Heart left ventricle (tissue), 16 donors: ENCODE measurements at regions of chr7 and their contacts with region 1.

Region 1: GRCh38 chr7:22559829-22560489 is 60.0 kb upstream of the STEAP1B start:
- DNase-seq: peak in 4 of 5 donors; percentile 70 to 80 (median 73)
- ATAC-seq: peak; percentile 65 to 78 (median 72)
- H3K4me3 ChIP-seq: no peak overlapping the region
- H3K27ac ChIP-seq: peak overlapping the region in 6 of 12 donors; percentile 70 to 85 (median 82)
- H3K4me1 ChIP-seq: peaks cover 7 to 49% (median 37%) of the 10 kb centered on the region in 12 donors
- H3K27me3 ChIP-seq: no peaks in the 10 kb centered on the region
- CTCF ChIP-seq: peak; percentile 75 to 96 (median 90)
- POLR2A ChIP-seq: no peak

Region 2: GRCh38 chr7:22617166-22617565 is 57.2 kb after region 1 on chr7:
- intact Hi-C with region 1: no loop called
- DNase-seq: no peak
- ATAC-seq: no peak
- H3K4me3 ChIP-seq: no peak overlapping the region
- H3K27ac ChIP-seq: no peak overlapping the region
- H3K4me1 ChIP-seq: no peaks in the 10 kb centered on the region
- H3K27me3 ChIP-seq: no peaks in the 10 kb centered on the region
- CTCF ChIP-seq: no peak
- POLR2A ChIP-seq: no peak

Region 3: DNA sequence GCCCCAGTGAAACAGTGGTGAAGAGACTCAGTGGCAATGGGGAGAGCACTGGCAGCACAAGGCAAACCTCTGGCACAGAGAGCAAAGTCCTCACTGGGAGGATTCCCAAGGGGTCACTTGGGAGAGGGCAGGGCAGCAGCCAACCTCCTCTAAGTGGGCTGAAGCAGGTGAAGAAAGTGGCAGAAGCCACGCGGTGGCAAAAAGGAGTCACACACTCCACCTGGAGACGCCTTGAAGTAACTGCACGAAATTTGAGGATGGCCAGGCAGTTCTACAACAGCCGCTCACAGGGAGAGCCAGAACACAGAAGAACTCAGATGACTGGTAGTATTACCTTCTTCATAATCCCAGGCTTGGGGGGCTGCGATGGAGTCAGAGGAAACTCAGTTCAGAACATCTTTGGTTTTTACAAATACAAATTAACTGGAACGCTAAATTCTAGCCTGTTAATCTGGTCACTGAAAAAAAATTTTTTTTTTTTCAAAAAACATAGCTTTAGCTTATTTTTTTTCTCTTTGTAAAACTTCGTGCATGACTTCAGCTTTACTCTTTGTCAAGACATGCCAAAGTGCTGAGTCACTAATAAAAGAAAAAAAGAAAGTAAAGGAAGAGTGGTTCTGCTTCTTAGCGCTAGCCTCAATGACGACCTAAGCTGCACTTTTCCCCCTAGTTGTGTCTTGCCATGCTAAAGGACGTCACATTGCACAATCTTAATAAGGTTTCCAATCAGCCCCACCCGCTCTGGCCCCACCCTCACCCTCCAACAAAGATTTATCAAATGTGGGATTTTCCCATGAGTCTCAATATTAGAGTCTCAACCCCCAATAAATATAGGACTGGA is 166.6 kb after region 1 on chr7:
- intact Hi-C with region 1: loop called in 9 of 10 experiments (anchors 1 to 5 kb)
- DNase-seq: peak in 4 of 5 donors; percentile 31 to 56 (median 42)
- ATAC-seq: peak; percentile 29 to 72 (median 52)
- H3K4me3 ChIP-seq: peak overlapping the region; percentile 3 to 57 (median 45)
- H3K27ac ChIP-seq: peak overlapping the region; percentile 19 to 85 (median 70)
- H3K4me1 ChIP-seq: peaks cover 4 to 78% (median 40%) of the 10 kb centered on the region in 12 donors
- H3K27me3 ChIP-seq: no peaks in the 10 kb centered on the region
- CTCF ChIP-seq: peak; percentile 27 to 61 (median 46)
- POLR2A ChIP-seq: no peak

Region 4: DNA sequence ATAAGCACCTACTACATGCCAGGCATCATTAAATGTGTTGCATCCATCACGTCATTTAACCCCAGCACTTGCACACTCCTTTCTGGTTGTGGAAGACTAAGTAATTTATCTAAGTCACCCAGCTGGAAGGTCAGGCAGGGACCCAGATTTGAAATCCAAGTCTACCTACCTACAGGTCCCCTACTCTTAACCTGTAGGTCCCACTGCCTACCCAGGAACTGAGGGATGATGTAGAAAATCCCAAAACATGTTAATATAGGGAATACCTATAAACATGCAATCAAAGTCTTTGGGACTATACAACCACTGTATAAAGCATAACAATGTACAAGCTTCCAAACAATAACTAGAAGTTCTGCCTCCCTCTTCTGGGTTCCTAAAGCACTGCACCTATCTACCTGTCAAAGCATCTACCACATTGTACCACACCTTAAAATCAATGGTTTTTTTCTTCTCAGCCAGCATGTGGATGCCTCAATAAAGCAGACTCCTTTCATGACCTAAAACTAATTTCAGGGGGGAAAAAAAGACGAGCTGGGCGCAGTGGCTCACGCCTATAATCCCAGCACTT is 172.7 kb after region 1 on chr7:
- intact Hi-C with region 1: loop called in 9 of 10 experiments (anchors 1 to 5 kb)
- DNase-seq: no peak
- ATAC-seq: no peak
- H3K4me3 ChIP-seq: no peak overlapping the region
- H3K27ac ChIP-seq: no peak overlapping the region
- H3K4me1 ChIP-seq: peaks cover 0 to 17% (median 3%) of the 10 kb centered on the region in 12 donors
- H3K27me3 ChIP-seq: peaks cover 0 to 2% (median 0%) of the 10 kb centered on the region in 9 donors
- CTCF ChIP-seq: peak in 8 of 12 donors; percentile 8 to 34 (median 22)
- POLR2A ChIP-seq: no peak

Region 5: GRCh38 chr7:22782616-22783232 is 222.8 kb after region 1 on chr7:
- intact Hi-C with region 1: loop called in 9 of 10 experiments (anchors 1 to 5 kb)
- DNase-seq: peak; percentile 42 to 71 (median 62)
- ATAC-seq: peak; percentile 47 to 75 (median 67)
- H3K4me3 ChIP-seq: no peak overlapping the region
- H3K27ac ChIP-seq: no peak overlapping the region
- H3K4me1 ChIP-seq: peaks cover 0 to 15% (median 0%) of the 10 kb centered on the region in 12 donors
- H3K27me3 ChIP-seq: no peaks in the 10 kb centered on the region
- CTCF ChIP-seq: peak; percentile 64 to 84 (median 73)
- POLR2A ChIP-seq: no peak

Region 6: GRCh38 chr7:22822486-22823141 is 262.7 kb after region 1 on chr7 and contains the start of gene TOMM7:
- intact Hi-C with region 1: loop called in 1 of 10 experiments (anchors 1 kb)
- DNase-seq: peak; percentile 91 to 94 (median 93)
- ATAC-seq: peak; percentile 96 to 98 (median 96)
- H3K4me3 ChIP-seq: peak within 1 kb of the TSS; percentile 56 to 97 (median 80)
- H3K27ac ChIP-seq: peak within 1 kb of the TSS in 11 of 12 donors; percentile 66 to 91 (median 85)
- H3K4me1 ChIP-seq: peaks cover 0 to 37% (median 20%) of the 10 kb centered on the region in 12 donors
- H3K27me3 ChIP-seq: no peaks in the 10 kb centered on the region
- CTCF ChIP-seq: peak; percentile 8 to 70 (median 54)
- POLR2A ChIP-seq: peak in 1 of 2 donors; percentile 70
- total RNA-seq, gene TOMM7: 137 to 529 (median 399) TPM

Region 7: DNA sequence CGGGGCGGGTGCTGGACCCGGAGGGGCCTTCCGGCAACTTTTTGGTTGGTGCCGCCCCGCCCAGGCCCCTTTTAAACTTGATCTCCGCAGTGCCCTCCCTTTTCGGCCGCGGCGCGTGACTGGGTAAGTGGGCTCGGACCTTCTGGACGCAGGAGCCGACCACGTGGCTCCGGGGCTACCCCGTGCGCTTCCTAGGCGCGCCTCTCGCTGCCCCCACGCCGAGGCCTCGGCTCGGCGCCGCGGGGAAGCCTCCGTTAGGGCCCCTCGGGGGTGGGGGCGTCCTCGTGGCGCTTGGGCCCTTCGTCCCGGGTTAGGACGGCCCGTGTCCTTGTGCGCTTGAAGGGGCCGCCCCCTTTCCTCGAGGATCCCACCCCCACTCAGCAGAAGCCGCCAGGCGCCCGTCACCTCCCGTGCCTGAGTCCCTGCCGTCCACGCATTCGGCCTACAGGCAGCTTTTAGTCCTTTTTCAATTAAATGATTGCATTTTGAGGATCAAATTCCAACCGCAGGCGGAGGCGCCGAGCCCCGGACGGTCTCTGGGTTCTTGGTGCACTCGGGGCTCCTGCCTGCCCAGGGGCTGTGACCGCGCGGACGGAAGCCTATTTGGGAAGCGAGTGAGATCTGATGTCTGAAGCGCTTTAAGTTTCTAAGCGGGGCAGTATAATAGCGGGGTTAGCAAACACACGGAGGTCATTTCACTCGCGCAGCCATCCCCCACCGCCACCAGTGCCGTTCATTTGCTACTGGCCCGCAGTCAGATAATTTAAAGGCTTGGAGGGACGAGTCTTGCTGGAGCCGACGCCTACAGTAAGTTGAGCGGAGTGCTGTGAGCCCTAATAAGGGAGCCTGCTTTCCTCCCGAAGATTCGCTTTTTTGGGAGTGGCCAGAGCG is 294.4 kb after region 1 on chr7:
- intact Hi-C with region 1: loop called in 4 of 10 experiments (anchors 5 to 10 kb)
- DNase-seq: peak; percentile 88 to 96 (median 93)
- ATAC-seq: peak; percentile 73 to 93 (median 86)
- H3K4me3 ChIP-seq: peak overlapping the region; percentile 40 to 91 (median 82)
- H3K27ac ChIP-seq: peak overlapping the region; percentile 83 to 98 (median 96)
- H3K4me1 ChIP-seq: peaks cover 0 to 45% (median 20%) of the 10 kb centered on the region in 12 donors
- H3K27me3 ChIP-seq: no peaks in the 10 kb centered on the region
- CTCF ChIP-seq: peak in 11 of 12 donors; percentile 67 to 96 (median 93)
- POLR2A ChIP-seq: peak in 1 of 2 donors; percentile 74

Region 8: DNA sequence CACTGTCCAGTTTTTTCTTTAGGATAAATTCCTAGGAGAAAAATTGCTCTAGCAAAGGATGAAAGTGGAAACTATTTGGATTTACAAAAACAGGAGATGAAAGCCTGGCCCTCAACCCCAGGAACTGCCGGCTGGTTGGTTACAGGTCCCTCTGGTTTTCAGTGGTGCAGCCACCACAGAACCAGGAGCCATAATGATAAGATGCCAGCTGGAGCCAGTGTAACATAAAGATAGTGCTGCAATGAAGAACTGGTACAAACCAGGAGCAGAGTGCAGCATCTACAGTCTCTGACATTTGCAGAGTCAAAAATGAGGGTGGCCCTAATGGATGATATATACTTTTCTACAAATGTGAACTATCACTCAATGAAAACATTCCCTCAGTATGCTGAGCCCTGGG is 601.5 kb after region 1 on chr7:
- intact Hi-C with region 1: loop called in 1 of 10 experiments (anchors 10 kb)
- DNase-seq: no peak
- ATAC-seq: peak in 2 of 4 donors; percentile 43 to 72
- H3K4me3 ChIP-seq: no peak overlapping the region
- H3K27ac ChIP-seq: no peak overlapping the region
- H3K4me1 ChIP-seq: peaks cover 0 to 17% (median 0%) of the 10 kb centered on the region in 12 donors
- H3K27me3 ChIP-seq: no peaks in the 10 kb centered on the region
- CTCF ChIP-seq: no peak
- POLR2A ChIP-seq: no peak